WTC11 (cell line): ENCODE measurements at regions of chr3 and their contacts with region 1.

Region 1: DNA sequence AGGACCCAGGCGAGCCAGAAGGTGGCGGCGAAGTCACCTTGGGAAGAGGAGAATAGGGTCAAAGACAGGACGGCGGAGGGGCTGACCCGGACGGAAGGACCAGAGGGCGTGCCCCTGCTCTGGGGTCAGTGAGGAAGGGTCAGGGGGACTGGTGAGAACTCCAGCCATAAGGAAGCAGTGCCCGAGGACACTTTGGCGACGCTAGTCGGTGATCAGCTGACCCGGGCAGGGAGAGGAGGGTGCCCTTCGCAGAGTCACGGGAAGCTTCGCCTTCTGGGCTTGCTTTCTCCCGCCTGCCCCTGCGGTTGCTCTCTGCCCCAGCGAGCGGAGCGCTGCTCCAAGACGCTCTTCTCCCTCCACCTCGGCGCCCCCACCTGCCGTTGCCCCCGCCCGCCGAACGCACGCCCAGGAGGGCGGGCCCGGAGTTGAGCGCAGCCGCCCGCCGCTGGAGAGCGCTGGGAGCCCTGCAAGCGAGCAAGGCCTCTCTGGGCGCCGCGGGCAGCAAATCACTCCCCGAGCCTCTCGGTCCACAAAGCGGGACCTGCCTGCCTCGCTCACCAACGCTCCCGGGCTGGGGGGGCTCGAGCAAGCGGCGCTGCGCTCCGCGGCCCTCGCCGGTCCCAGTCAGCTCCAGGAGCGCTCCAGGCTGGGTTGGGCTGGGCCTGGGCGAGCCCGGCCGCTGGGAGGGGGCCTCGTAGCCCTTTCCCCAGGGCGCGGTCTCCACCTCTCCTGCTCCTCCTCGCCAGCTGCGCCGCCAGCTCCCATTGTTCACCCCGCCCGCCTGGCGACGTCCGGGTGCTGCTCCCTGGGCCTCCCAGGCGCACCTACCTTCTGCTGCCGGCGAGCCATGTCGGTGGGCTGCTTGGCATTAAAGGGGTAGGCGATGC is 1.2 kb downstream of the CADPS start:
- DNase-seq: peak; percentile 89
- ATAC-seq: peak; percentile 76
- H3K4me3 Mint-ChIP-seq: peak overlapping the region; percentile 78
- H3K27ac Mint-ChIP-seq: peak overlapping the region; percentile 85
- H3K4me1 Mint-ChIP-seq: peaks cover 16% of the 10 kb centered on the region
- H3K27me3 Mint-ChIP-seq: peaks cover 4% of the 10 kb centered on the region; the same call in 1 of the 2 replicates
- CTCF ChIP-seq: no peak

Region 2: DNA sequence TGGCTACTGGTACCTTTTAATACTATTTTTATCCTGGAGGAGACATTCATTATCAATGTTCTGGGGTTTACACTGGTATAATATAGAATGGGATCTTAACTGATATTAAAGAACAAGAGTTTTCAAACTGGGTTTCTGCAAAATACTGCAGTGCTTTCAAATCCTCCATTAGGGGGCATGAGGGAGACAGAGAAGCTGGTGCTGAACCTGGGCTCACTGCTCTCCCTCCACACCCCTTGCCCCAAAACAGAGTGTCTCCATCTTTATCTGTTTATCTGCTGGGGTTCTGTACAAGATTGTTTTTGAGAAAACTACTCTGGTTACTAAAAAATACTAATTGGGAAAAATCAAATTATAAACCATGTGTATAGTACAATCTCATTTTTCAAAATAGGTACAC is 40.5 kb before region 1 on chr3:
- CTCF ChIA-PET with region 1: interaction called, 14 read pairs
- POLR2A ChIA-PET with region 1: no interaction called
- DNase-seq: no peak
- ATAC-seq: peak; percentile 85
- H3K4me3 Mint-ChIP-seq: no peak overlapping the region
- H3K27ac Mint-ChIP-seq: no peak overlapping the region
- H3K4me1 Mint-ChIP-seq: no peaks in the 10 kb centered on the region
- H3K27me3 Mint-ChIP-seq: no peaks in the 10 kb centered on the region
- CTCF ChIP-seq: peak; percentile 33; the same call in 1 of the 2 replicates

Region 3: DNA sequence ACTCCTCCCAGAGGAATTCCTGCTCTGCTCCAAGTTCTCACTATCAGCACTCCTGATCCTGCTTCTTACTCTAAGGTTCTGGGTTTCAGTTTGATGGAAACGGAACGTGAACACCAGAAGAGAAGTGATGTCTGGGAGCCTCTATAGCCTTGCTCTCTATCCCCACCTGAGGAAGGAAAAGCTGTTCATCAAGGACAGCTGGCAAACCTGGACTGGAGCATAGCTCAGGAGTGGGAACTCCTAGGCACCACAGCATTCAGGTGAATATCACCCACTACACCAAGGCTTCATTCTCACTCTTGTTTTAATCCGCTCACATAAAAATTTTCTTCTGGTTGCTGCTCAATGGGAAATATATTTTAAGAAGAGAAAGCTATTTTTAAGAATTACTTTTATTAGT is 14.2 kb after region 1 on chr3:
- CTCF ChIA-PET with region 1: interaction called, 18 read pairs
- POLR2A ChIA-PET with region 1: interaction called, 8 read pairs
- DNase-seq: peak; percentile 22
- ATAC-seq: peak; percentile 94
- H3K4me3 Mint-ChIP-seq: peak overlapping the region; percentile 54
- H3K27ac Mint-ChIP-seq: no peak overlapping the region
- H3K4me1 Mint-ChIP-seq: peaks cover 55% of the 10 kb centered on the region
- H3K27me3 Mint-ChIP-seq: no peaks in the 10 kb centered on the region
- CTCF ChIP-seq: no peak

Region 4: DNA sequence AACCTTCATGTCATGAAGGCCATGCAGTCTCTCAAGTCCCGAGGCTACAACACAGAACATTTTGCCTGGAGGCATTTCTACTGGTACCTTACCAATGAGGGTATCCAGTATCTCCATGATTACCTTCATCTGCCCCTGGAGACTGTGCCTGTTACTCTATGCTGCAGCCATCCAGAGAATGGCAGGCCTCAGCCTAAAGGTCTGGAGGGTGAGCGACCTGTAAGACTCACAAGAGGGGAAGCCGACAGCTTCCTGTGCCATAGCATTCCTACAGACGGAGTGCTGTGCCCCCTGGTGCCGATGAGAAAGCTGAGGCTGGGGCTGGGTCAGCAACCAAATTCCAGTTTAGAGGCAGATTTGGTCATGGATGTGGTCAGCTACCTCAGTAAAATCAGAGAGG is 52.5 kb after region 1 on chr3:
- CTCF ChIA-PET with region 1: interaction called, 49 read pairs
- POLR2A ChIA-PET with region 1: interaction called, 4 read pairs
- DNase-seq: peak; percentile 65
- ATAC-seq: peak; percentile 99
- H3K4me3 Mint-ChIP-seq: no peak overlapping the region
- H3K27ac Mint-ChIP-seq: no peak overlapping the region
- H3K4me1 Mint-ChIP-seq: peaks cover 23% of the 10 kb centered on the region
- H3K27me3 Mint-ChIP-seq: no peaks in the 10 kb centered on the region; the same call in none of the 2 replicates
- CTCF ChIP-seq: no peak

Region 5: DNA sequence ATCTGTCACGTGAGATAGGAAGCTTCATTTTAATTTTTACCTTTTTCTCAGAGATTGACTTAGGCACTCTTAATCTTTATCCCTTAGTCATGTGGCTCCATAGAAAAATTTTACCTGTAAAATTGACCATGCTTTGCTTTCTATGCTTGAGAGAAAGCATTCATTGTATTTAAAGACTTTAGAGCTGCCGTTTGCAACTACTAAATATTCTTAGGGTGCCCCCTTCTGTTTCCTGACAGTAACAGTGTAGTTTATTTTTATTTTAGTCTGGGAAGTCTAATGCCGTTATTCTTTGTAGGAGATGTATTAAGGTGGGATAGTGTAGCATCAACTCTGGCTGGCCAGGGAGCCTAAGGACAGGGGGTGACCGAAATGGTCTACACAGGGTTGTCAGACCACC is 319.6 kb after region 1 on chr3:
- CTCF ChIA-PET with region 1: interaction called, 28 read pairs
- POLR2A ChIA-PET with region 1: no interaction called
- DNase-seq: no peak
- ATAC-seq: peak; percentile 67
- H3K4me3 Mint-ChIP-seq: no peak overlapping the region
- H3K27ac Mint-ChIP-seq: no peak overlapping the region
- H3K4me1 Mint-ChIP-seq: peaks cover 9% of the 10 kb centered on the region
- H3K27me3 Mint-ChIP-seq: no peaks in the 10 kb centered on the region
- CTCF ChIP-seq: peak; percentile 46; the same call in 1 of the 2 replicates

Region 6: GRCh38 chr3:63228087-63229023 is 354.4 kb after region 1 on chr3:
- CTCF ChIA-PET with region 1: interaction called, 26 read pairs
- POLR2A ChIA-PET with region 1: interaction called, 3 read pairs
- DNase-seq: peak; percentile 29
- ATAC-seq: peak; percentile 73
- H3K4me3 Mint-ChIP-seq: no peak overlapping the region
- H3K27ac Mint-ChIP-seq: peak overlapping the region; percentile 86; the same call in 1 of the 2 replicates
- H3K4me1 Mint-ChIP-seq: peaks cover 20% of the 10 kb centered on the region
- H3K27me3 Mint-ChIP-seq: no peaks in the 10 kb centered on the region
- CTCF ChIP-seq: peak; percentile 39